Activated CD4-positive, alpha-beta memory T cell treated with anti-CD3 and anti-CD28 coated beads for 36 hours (primary cell): ENCODE measurements at regions of chr13 and their contacts with region 1.

Region 1: DNA sequence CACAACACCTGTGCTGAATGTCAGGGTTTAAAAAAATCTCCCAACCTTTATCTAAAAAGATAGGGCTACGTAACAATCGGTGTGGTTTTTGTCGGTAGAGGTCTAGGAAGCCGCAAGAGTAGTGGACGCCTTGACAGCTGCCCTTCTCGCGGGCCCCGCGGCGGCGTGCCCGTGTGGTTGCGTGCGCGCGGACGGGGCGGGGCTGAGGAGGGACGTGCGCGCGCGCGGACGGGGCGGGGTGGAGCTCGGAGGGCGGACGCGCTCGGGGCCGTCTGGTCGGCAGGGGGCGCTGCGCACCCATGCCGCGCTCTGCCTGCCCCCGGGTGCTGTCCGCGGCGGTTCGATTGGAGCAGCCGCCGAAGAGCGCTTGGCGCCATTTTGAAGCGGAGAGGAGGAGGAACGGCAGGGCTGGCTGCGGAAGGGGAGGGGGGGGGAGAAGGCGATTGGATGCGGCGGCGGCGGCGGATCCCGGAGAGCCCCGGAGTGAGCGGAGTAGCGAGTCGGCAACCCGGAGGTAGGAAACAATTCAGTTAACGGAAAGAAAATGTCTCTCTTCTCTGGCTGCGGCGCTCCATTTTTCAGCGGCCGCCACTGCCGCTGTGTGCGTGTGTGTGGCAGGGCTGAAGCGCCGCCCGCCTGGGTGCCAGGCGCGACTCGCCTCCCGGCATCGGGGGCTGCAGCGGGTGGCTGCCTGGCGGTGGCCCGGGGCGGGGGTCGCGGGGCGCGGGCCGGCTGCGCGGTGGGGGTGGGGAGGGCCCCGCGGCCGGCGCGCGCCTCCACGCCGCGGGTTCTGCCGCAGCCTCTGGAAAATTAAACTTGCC is at the start of gene PDS5B:
- DNase-seq: peak; percentile 95
- H3K4me3 Mint-ChIP-seq: peak within 1 kb of the TSS; percentile 94
- H3K27ac Mint-ChIP-seq: peak within 1 kb of the TSS; percentile 95
- H3K4me1 Mint-ChIP-seq: peaks cover 36% of the 10 kb centered on the region
- H3K27me3 Mint-ChIP-seq: no peaks in the 10 kb centered on the region
- total RNA-seq, gene PDS5B: 59.4 to 61.7 TPM

Region 2: DNA sequence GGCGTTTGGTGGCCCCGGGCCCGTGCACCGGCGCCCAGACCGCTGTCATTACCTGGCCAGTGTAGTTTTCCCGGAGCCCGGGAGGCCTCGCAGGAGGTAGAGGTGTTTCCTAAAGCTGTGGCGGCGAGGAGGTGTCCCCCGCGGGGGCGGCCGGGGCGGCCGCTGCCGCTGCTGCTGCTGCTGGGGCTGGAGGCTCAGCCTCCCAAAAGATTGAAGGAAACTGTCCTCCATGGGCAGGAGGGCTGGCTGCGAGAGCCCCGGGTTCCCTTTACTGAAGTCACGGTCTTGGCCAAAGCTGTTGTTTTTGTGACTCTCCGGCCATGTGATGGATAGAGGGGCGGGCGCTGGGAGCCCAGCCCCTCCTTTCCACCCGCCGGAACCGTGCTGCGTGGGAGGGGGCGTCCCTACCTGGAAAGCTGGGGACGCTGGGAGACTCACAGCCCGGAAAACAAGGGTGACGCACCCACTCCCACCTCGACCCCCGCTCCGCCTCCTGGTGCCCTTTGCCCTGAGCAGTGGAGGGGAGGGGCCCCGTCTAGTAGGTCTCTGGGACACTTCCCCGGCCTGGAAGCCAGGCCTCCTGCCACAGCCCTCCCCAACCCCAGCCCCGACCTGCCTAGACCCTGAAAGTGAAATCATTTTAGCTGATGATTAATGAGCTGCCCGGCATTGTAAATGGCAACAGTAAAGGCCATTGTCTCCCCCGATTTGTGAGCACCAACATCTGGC is 158.3 kb before region 1 on chr13 and contains the start of gene N4BP2L1:
- CTCF ChIA-PET with region 1: interaction called, 8 read pairs
- POLR2A ChIA-PET with region 1: interaction called, 4 read pairs
- intact Hi-C with region 1: loop called (anchors 1 kb)
- DNase-seq: peak; percentile 94
- H3K4me3 Mint-ChIP-seq: peak within 1 kb of the TSS; percentile 88
- H3K27ac Mint-ChIP-seq: peak within 1 kb of the TSS; percentile 96
- H3K4me1 Mint-ChIP-seq: peaks cover 38% of the 10 kb centered on the region
- H3K27me3 Mint-ChIP-seq: no peaks in the 10 kb centered on the region
- total RNA-seq, gene N4BP2L1: 22.1 to 24.0 TPM

Region 3: DNA sequence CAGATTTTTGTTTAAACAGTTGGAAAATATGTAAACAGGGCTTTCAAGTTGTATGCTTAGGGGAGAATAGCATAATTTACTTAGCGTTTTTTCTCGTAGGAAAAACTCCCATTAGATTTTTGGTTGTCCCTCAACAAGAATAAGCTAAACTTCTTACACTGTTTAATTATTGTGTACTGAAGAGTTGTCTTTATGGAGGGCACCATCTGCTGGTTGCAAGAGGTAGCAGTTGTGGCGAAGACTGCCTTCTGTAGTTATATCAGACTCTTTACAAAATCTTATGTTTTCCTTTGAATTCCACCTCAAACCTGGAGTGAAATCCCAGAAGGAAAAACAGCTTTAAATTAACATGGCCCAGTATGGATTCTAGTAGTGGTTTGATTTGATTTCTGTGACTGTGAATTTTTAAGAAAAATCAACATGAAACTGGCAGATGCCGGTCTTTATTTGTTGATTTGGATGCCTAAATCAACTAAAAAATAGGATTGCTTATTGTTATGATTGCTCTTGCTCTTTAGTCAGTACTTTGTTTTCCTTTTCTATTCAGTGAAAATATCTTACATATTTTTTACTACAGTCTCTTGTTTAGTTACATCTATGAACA is 53.3 kb after region 1 on chr13:
- CTCF ChIA-PET with region 1: interaction called, 41 read pairs
- POLR2A ChIA-PET with region 1: interaction called, 3 read pairs
- intact Hi-C with region 1: loop called (anchors 1 kb)
- DNase-seq: peak; percentile 56
- H3K4me3 Mint-ChIP-seq: no peak overlapping the region
- H3K27ac Mint-ChIP-seq: no peak overlapping the region
- H3K4me1 Mint-ChIP-seq: peaks cover 41% of the 10 kb centered on the region
- H3K27me3 Mint-ChIP-seq: no peaks in the 10 kb centered on the region

Region 4: DNA sequence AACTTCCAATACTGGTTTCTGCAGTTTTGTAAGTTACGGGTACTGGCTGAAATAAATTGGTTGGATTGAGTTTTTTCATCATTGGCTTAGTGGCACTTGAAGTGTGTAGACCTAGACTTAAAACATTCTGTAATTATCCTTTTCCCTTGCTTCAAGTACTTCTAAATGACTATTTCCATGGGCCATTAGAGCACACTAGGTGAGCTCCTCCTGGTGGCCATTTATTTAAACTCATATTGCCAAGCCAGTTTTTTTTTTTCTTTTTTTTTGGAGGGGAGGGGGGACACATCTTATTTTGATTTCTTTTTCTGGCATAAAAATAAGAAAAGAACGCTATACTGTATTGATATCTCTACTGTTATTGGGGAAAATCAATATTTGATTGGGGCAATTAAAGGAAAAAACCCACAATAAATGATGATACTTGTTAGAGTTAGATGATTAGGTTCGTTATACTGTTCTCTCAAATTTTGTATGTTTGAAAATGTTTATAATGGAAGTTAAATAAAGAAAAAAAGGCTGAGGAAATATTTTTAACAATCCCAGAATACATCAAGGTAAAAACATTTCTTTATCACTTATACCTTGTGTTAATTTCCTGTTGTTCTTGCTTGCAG is 82.8 kb after region 1 on chr13:
- CTCF ChIA-PET with region 1: interaction called, 42 read pairs
- POLR2A ChIA-PET with region 1: interaction called, 4 read pairs
- intact Hi-C with region 1: loop called (anchors 1 kb)
- DNase-seq: no peak
- H3K4me3 Mint-ChIP-seq: no peak overlapping the region
- H3K27ac Mint-ChIP-seq: no peak overlapping the region
- H3K4me1 Mint-ChIP-seq: no peaks in the 10 kb centered on the region
- H3K27me3 Mint-ChIP-seq: no peaks in the 10 kb centered on the region

Region 5: DNA sequence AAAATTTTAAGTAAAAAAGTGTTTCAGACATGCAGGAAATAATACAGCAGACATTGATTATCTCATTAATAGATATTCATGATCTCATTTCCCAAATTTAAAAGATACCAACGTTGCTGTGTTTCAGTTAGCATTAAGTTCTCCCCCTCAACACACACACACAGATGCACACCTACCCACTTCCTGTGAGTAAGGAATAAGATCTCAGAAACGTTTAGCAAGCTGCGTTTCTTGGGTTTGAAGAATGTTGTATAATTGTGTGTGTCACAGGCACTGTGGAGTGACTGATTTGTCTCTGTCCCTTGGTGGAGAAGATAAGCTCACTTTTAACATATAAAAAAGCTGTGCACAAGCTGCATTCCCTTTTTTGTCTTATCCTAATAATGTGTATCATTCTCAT is 196.8 kb after region 1 on chr13:
- CTCF ChIA-PET with region 1: no interaction called
- POLR2A ChIA-PET with region 1: no interaction called
- intact Hi-C with region 1: loop called (anchors 5 kb)
- DNase-seq: peak; percentile 29
- H3K4me3 Mint-ChIP-seq: no peak overlapping the region
- H3K27ac Mint-ChIP-seq: no peak overlapping the region
- H3K4me1 Mint-ChIP-seq: peaks cover 15% of the 10 kb centered on the region
- H3K27me3 Mint-ChIP-seq: no peaks in the 10 kb centered on the region

Region 6: DNA sequence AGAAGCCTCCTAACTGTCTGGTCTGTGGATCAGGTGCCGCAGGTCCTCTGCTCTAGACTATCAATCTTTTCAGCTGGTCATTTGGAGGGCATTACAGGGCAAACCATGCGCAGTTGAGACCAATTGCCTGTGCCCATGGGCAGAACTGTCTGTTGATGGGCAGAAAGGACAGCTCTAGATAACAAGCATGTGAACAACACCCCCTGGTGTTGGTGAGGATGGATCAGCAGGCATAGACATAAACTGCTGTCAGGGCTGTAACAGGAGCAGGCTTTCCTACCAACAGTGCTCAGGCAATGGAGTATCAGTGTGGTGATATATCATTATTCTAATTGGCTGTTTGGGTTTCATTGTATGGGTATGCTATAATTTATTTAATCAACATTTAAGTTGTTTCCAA is 325.2 kb after region 1 on chr13:
- CTCF ChIA-PET with region 1: interaction called, 3 read pairs
- POLR2A ChIA-PET with region 1: no interaction called
- intact Hi-C with region 1: loop called (anchors 1 kb)
- DNase-seq: peak; percentile 34
- H3K4me3 Mint-ChIP-seq: no peak overlapping the region
- H3K27ac Mint-ChIP-seq: no peak overlapping the region
- H3K4me1 Mint-ChIP-seq: no peaks in the 10 kb centered on the region
- H3K27me3 Mint-ChIP-seq: peaks cover 22% of the 10 kb centered on the region

Region 7: GRCh38 chr13:33723772-33724435 is 1137.6 kb after region 1 on chr13:
- CTCF ChIA-PET with region 1: interaction called, 3 read pairs
- POLR2A ChIA-PET with region 1: no interaction called
- intact Hi-C with region 1: loop called (anchors 5 kb)
- DNase-seq: peak; percentile 78
- H3K4me3 Mint-ChIP-seq: no peak overlapping the region
- H3K27ac Mint-ChIP-seq: peak overlapping the region; percentile 57
- H3K4me1 Mint-ChIP-seq: peaks cover 37% of the 10 kb centered on the region
- H3K27me3 Mint-ChIP-seq: no peaks in the 10 kb centered on the region